Endothelial cell of umbilical vein (primary cell): ENCODE measurements at regions of chr10 and their contacts with region 1.

Region 1: GRCh38 chr10:119305860-119306513 is 98.6 kb downstream of the GRK5 start:
- DNase-seq: peak; percentile 99
- H3K4me3 ChIP-seq: no peak overlapping the region
- H3K27ac ChIP-seq: peak overlapping the region; percentile 93
- H3K4me1 ChIP-seq: peaks cover 49% of the 10 kb centered on the region
- H3K27me3 ChIP-seq: no peaks in the 10 kb centered on the region
- CTCF ChIP-seq: no peak
- POLR2A ChIP-seq: peak; percentile 29

Region 2: DNA sequence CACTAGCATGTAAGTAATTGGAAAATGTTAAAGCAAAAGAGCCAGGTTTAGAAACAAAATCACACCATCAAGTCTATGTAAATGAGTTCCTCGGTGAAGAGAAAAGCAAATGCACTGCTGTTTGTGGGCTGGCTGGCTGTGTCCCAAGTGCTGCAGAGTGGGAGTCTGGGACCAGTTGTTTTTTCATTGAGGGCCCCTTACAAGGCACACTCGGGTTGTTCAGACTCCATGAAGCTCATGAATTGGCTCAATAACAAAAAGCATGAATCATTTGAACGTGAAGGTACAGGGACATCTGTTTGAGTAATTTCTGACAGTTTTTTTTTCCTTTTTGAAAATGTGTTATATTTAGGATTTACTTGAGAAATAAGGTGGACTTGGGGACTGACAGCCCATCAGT is 70.6 kb before region 1 on chr10:
- CTCF ChIA-PET with region 1: interaction called, 3 read pairs
- POLR2A ChIA-PET with region 1: interaction called, 7 read pairs
- dilution Hi-C with region 1: no loop called
- intact Hi-C with region 1: loop called (anchors 1 kb)
- DNase-seq: peak; percentile 62
- H3K4me3 ChIP-seq: no peak overlapping the region
- H3K27ac ChIP-seq: peak overlapping the region; percentile 56
- H3K4me1 ChIP-seq: peaks cover 49% of the 10 kb centered on the region
- H3K27me3 ChIP-seq: no peaks in the 10 kb centered on the region
- CTCF ChIP-seq: no peak
- POLR2A ChIP-seq: no peak

Region 3: GRCh38 chr10:119246862-119247549 is 59.0 kb before region 1 on chr10:
- CTCF ChIA-PET with region 1: interaction called, 4 read pairs
- POLR2A ChIA-PET with region 1: no interaction called
- dilution Hi-C with region 1: no loop called
- intact Hi-C with region 1: loop called (anchors 1 kb)
- DNase-seq: peak; percentile 90
- H3K4me3 ChIP-seq: no peak overlapping the region
- H3K27ac ChIP-seq: peak overlapping the region; percentile 54
- H3K4me1 ChIP-seq: peaks cover 40% of the 10 kb centered on the region
- H3K27me3 ChIP-seq: no peaks in the 10 kb centered on the region
- CTCF ChIP-seq: no peak
- POLR2A ChIP-seq: no peak

Region 4: DNA sequence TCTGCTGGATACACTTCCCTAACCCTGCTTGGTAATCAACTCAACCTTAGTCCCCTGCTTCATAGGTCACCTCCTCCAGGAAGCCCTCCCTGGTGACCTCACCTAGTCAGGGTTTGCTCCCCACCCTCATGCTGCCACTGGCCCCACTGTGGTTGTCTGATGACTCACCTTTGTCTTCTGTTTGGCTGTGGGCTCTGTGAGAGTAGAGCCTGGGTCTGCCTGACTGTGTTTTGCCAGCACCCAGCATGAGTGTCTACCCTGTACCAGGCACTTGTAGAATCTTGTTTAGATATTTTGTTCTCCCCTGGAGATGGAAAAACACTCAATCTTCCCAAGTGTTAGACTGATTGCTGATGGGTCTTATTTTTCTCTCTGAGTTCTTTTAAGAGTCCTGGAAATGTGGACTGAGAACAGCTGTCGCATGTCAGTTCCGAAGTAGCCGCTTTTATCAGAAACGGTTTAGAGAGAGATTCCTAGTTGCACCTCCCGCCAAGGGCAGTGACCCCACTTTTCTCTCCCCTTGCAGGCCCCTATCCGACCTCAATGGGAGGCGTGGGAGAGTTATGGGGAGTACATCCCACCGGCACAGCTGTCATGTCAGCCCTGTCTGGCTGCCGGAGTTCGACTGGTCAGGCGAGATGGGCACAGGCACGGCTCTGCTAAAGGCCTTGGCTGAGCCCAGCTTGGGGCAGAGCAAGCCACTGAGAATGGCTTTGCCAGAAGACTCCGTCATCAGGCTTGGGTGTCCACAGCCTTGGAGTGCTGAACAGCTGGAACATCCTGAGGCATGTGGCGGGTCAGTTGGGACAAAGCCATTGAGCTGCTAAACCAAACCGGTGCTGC is 35.7 kb after region 1 on chr10:
- CTCF ChIA-PET with region 1: interaction called, 3 read pairs
- POLR2A ChIA-PET with region 1: no interaction called
- dilution Hi-C with region 1: no loop called
- intact Hi-C with region 1: loop called (anchors 1 kb)
- DNase-seq: peak; percentile 44
- H3K4me3 ChIP-seq: no peak overlapping the region
- H3K27ac ChIP-seq: no peak overlapping the region
- H3K4me1 ChIP-seq: peaks cover 21% of the 10 kb centered on the region
- H3K27me3 ChIP-seq: no peaks in the 10 kb centered on the region
- CTCF ChIP-seq: no peak
- POLR2A ChIP-seq: no peak

Region 5: GRCh38 chr10:119370111-119370741 is 64.2 kb after region 1 on chr10:
- CTCF ChIA-PET with region 1: interaction called, 5 read pairs
- POLR2A ChIA-PET with region 1: no interaction called
- dilution Hi-C with region 1: no loop called
- intact Hi-C with region 1: loop called (anchors 1 kb)
- DNase-seq: peak; percentile 92
- H3K4me3 ChIP-seq: peak overlapping the region in 2 of 3 experiments; percentile 11 to 68
- H3K27ac ChIP-seq: peak overlapping the region; percentile 98
- H3K4me1 ChIP-seq: peaks cover 43% of the 10 kb centered on the region
- H3K27me3 ChIP-seq: no peaks in the 10 kb centered on the region
- CTCF ChIP-seq: no peak
- POLR2A ChIP-seq: no peak

Region 6: DNA sequence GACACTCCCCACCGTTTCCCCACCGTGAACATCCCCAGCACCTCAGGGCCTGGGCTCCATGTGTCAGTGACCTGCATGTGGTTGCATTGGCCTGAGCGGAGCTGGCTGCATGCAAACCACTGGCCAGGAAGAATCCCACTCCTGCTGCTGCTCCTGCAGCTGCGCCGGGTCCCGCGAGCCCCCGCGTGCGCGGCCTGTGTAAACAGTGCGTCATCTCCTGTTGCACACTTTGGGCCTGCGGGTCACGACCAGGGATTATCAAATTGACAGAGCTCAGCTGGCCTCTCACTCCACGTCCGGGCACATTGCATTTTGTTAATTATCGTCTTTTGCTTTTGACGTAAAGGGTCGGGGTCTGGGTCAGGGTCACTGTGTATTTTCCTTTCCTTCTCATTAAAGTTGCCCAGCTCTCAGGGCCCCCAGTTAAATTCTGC is 103.9 kb after region 1 on chr10:
- CTCF ChIA-PET with region 1: interaction called, 6 read pairs
- POLR2A ChIA-PET with region 1: interaction called, 5 read pairs
- dilution Hi-C with region 1: no loop called
- intact Hi-C with region 1: loop called (anchors 1 kb)
- DNase-seq: peak; percentile 94
- H3K4me3 ChIP-seq: no peak overlapping the region
- H3K27ac ChIP-seq: peak overlapping the region; percentile 85
- H3K4me1 ChIP-seq: peaks cover 44% of the 10 kb centered on the region
- H3K27me3 ChIP-seq: no peaks in the 10 kb centered on the region
- CTCF ChIP-seq: no peak
- POLR2A ChIP-seq: peak; percentile 66